Left ventricle myocardium superior (tissue), 1 donor: ENCODE measurements at regions of chr12 and their contacts with region 1.

Region 1: GRCh38 chr12:62703011-62703380 is 232.0 kb downstream of the PPM1H start:
- DNase-seq: no peak
- ATAC-seq: peak; percentile 10

Region 2: DNA sequence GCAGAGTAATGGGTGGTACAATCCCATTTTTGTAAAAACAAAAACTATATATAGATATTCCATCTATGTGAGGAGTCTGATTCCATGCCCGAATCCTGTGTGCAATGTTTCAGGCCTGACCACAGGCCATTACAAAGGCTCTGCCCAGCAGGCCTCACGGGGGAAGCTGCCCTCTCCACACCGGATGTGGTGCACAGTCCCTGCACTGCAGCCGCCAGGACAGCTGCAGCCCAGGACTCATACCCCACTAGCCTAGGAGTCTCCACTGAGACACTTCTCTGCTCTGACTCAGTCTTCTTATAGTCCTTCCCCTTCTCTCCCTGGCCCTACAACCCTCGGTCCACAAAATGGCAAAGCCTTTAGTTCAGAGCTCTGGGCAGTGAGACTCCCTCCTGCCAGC is 41.6 kb after region 1 on chr12:
- intact Hi-C with region 1: no loop called
- DNase-seq: peak; percentile 43
- ATAC-seq: peak; percentile 69

Region 3: GRCh38 chr12:62793256-62794217 is 90.5 kb after region 1 on chr12:
- intact Hi-C with region 1: loop called (anchors 5 kb)
- DNase-seq: peak; percentile 90
- ATAC-seq: peak; percentile 85